Right ventricle myocardium inferior (tissue), 1 donor: ENCODE measurements at regions of chr7 and their contacts with region 1.

Region 1: GRCh38 chr7:105149827-105150226 is 135.8 kb downstream of the KMT2E start:
- DNase-seq: no peak
- ATAC-seq: no peak

Region 2: DNA sequence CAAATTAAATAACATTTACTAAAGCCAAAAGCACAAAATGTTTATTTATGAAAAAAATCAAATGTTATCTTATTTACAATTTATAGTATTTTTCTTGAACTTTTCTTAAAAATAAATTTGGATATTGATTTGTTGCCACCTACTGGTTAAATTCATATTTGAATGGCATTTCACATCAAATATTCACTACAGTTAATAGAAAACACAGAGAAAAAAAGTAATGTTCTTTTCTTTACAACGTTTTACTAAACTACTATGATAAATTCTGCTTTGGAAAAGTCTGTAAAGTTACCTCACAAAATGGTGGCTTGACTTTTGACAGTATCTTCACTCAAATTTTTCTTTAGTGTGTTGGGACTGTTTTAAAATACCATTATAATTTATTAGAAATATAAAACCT is 186.2 kb after region 1 on chr7:
- intact Hi-C with region 1: loop called (anchors 10 kb)
- DNase-seq: no peak
- ATAC-seq: no peak

Region 3: DNA sequence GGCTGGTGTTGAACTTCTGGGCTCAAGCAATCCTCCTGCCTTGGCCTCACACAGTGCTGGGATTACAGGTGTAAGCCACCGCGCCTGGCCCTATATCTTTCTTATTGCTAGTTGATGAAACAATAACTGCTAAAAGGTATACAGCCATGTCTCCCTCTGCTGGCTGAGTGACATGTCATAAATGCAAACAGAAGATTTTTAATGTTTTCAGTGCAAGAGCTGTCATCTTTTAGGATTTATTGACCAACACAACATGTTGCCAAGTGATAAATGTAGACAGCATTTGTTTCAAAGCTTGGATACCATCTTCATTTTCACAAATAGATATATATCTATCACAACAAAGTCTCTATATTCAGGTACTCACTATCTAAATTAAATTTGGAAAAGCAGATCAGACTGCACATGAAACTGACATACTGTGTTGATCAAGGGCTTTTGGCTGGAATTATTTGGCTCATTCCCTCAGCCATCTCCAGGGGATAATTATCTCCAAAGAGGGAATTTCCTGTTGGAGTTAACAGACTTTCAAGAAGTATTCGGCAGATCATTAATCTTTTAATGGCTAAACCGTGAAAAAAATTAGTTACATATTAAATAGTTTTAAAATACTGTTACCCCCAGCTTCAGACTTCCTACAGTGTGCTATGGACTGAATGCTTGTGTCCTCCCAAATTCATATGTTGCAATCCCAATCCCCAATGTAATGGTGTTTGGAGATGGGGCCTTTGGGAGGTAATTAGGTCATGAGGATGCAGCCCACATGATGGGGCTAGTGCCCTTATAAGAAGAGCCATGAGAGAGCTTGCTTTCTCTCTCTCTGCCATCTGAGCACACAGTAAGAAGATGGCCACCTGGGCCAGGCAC is 280.2 kb after region 1 on chr7:
- intact Hi-C with region 1: loop called (anchors 2 kb)
- DNase-seq: no peak
- ATAC-seq: peak; percentile 26